Common myeloid progenitor, CD34-positive (primary cell): ENCODE measurements at regions of chr2 and their contacts with region 1.

Region 1: GRCh38 chr2:176653479-176654443 is 384.5 kb downstream of the MTX2 start:
- DNase-seq: peak; percentile 58 to 74 (median 71)
- H3K4me3 ChIP-seq: no peak overlapping the region
- H3K27ac ChIP-seq: no peak overlapping the region
- H3K4me1 ChIP-seq: peaks cover 0 to 2% (median 0%) of the 10 kb centered on the region in 4 experiments
- H3K27me3 ChIP-seq: peaks cover 7 to 58% (median 22%) of the 10 kb centered on the region in 5 experiments

Region 2: DNA sequence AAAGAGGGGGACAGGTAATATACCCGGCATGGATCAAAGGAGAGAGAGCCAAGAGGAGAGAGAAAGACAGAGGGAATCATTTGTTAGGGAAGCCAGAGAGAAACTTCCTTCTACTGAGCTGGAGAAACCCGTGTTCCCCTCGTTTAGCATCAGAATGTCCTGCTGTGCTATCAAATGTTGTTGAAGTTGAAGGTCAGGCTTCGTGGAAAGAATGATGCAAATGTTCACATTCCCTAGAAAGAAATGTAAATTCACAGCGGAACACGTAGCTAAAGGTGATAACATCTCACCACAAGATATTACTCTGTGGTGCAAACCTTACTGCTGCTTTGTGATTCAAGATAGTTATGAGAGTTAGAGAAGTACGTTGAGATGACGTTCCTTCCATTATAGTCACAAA is 909.8 kb before region 1 on chr2:
- CTCF ChIA-PET with region 1: no interaction called
- POLR2A ChIA-PET with region 1: no interaction called
- DNase-seq: no peak
- H3K4me3 ChIP-seq: no peak overlapping the region
- H3K27ac ChIP-seq: no peak overlapping the region
- H3K4me1 ChIP-seq: no peaks in the 10 kb centered on the region
- H3K27me3 ChIP-seq: peaks cover 0 to 2% (median 0%) of the 10 kb centered on the region in 5 experiments

Region 3: GRCh38 chr2:176595986-176596385 is 57.8 kb before region 1 on chr2:
- CTCF ChIA-PET with region 1: no interaction called
- POLR2A ChIA-PET with region 1: no interaction called
- DNase-seq: no peak
- H3K4me3 ChIP-seq: no peak overlapping the region
- H3K27ac ChIP-seq: no peak overlapping the region
- H3K4me1 ChIP-seq: no peaks in the 10 kb centered on the region
- H3K27me3 ChIP-seq: peaks cover 0 to 7% (median 0%) of the 10 kb centered on the region in 5 experiments

Region 4: DNA sequence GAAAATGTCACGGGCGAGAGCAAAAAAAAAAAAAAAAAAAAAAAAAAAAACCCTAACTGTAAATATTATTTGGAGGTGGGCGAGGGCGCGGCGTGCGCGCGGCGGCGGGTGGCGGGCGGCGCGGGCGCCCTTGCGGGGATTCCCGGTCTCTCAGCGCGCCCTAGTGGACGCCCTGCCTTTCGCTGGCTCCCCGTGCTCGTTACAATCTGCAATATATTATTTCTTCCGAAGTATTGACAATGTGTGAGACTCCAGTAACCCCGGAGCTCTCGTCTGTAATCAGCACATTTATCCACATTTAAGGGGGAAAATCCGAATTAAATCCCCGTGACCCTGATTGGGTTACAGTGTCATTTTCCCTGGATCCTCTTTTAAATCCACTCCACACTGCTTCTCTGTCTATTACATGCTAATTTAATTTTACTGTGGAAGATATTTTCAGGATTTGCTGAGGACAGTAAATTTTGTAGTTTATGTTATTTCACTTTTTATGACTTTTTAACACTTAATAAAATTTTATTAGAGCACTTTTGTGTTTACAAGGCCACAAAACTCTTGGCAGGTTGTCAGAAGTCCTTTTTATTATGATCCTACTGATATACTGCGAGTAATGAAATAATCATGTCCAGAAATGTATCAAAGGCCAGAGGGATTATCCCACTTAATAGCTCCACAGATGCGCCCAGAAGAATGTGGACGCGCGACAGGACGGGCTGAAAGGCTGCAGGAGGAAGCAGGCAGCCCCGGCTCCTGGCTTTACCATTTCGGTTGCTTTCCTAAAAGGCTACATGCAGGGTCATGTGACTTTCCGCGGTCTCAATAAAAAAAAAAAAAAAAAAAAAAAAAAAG is 15.4 kb before region 1 on chr2:
- CTCF ChIA-PET with region 1: interaction called, 33 read pairs
- POLR2A ChIA-PET with region 1: interaction called, 3 read pairs
- DNase-seq: peak; percentile 63 to 75 (median 75)
- H3K4me3 ChIP-seq: peak overlapping the region in 6 of 7 experiments; percentile 15 to 68 (median 58)
- H3K27ac ChIP-seq: no peak overlapping the region
- H3K4me1 ChIP-seq: peaks cover 0 to 12% (median 9%) of the 10 kb centered on the region in 4 experiments
- H3K27me3 ChIP-seq: peaks cover 38 to 92% (median 52%) of the 10 kb centered on the region in 5 experiments

Region 5: DNA sequence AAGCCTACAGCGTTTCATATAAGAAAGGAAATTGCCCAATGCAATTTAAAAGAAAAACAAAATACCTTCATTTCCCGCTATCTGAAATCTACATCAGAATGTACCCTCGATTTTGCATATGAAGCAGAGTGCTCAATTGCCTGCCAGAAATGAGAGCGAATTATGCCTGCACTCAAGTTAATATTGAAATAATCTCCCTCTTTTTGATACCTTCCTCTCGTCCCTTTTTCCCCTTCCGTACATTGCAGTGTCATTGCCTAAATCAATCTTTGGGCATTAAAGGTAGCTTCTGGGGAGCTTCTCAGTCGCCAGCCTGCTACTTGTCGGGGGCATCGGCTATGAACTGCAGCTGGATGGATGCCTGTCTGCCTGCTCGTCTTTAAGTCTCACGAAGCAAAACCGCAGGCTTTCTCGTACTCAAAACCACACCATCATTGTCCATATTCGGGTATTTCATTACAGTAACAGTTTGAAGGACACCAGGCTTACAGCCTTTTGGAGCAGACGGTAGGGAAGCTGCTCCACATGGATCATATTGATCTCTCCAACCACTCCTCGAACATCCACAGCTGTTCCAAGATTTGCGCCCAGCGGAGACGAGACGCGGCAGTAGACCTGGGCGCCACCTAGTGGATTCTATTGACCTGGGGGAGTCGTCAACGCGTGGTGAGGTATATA is 494.9 kb after region 1 on chr2:
- CTCF ChIA-PET with region 1: interaction called, 25 read pairs
- POLR2A ChIA-PET with region 1: no interaction called
- DNase-seq: peak; percentile 73 to 88 (median 80)
- H3K4me3 ChIP-seq: peak overlapping the region in 6 of 7 experiments; percentile 63 to 76 (median 66)
- H3K27ac ChIP-seq: no peak overlapping the region
- H3K4me1 ChIP-seq: peaks cover under 1 to 13% (median 9%) of the 10 kb centered on the region in 4 experiments
- H3K27me3 ChIP-seq: peaks cover 0 to 25% (median 9%) of the 10 kb centered on the region in 5 experiments